Left ventricle myocardium superior (tissue), 1 donor: ENCODE measurements at regions of chr11 and their contacts with region 1.

Region 1: GRCh38 chr11:128955636-128956035 is 13.0 kb upstream of the TP53AIP1 start:
- DNase-seq: no peak
- ATAC-seq: no peak

Region 2: GRCh38 chr11:128884703-128885338 is 70.8 kb before region 1 on chr11:
- intact Hi-C with region 1: loop called (anchors 2 kb)
- DNase-seq: peak; percentile 53
- ATAC-seq: peak; percentile 83